PC-3 (cell line): ENCODE measurements at regions of chr5 and their contacts with region 1.

Region 1: GRCh38 chr5:103041071-103041676 is 78.8 kb downstream of the GIN1 start:
- DNase-seq: peak; percentile 88
- ATAC-seq: peak; percentile 78
- H3K4me3 ChIP-seq: no peak overlapping the region
- H3K27ac ChIP-seq: no peak overlapping the region
- H3K4me1 ChIP-seq: peaks cover 8% of the 10 kb centered on the region; the same call in 1 of the 2 replicates
- H3K27me3 ChIP-seq: no peaks in the 10 kb centered on the region
- CTCF ChIP-seq: peak; percentile 82

Region 2: DNA sequence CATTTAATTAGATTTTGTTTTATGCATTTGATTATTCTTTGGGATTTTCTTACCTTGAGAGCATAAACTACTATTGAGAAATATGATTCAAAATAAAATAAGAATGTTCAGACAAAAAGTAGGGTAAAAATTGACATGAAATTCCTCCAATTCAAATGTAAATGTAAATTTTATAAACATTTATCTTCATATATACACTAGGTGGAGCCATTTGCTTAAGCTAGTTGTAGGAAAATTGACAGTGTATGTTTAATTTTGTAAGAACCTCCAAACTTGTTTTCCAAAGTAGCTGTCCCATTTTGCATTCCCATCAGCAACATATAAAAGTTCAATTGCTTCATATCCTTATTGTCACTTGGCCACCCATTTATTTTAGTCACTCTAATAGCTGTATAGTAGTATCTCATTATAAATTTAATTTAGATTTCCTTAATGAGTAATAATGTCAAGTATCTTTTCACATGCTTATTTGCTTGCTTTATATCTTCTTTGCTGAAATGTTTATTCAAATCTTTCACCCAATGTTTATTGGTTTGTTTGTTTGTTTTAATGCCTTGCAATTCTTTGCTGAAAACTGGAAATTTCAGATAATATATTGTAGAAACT is 504.7 kb before region 1 on chr5:
- CTCF ChIA-PET with region 1: no interaction called
- POLR2A ChIA-PET with region 1: no interaction called
- intact Hi-C with region 1: loop called (anchors 1 kb)
- DNase-seq: peak; percentile 63
- ATAC-seq: peak; percentile 57
- H3K4me3 ChIP-seq: no peak overlapping the region
- H3K27ac ChIP-seq: no peak overlapping the region
- H3K4me1 ChIP-seq: no peaks in the 10 kb centered on the region
- H3K27me3 ChIP-seq: peaks cover 3% of the 10 kb centered on the region
- CTCF ChIP-seq: peak; percentile 79

Region 3: DNA sequence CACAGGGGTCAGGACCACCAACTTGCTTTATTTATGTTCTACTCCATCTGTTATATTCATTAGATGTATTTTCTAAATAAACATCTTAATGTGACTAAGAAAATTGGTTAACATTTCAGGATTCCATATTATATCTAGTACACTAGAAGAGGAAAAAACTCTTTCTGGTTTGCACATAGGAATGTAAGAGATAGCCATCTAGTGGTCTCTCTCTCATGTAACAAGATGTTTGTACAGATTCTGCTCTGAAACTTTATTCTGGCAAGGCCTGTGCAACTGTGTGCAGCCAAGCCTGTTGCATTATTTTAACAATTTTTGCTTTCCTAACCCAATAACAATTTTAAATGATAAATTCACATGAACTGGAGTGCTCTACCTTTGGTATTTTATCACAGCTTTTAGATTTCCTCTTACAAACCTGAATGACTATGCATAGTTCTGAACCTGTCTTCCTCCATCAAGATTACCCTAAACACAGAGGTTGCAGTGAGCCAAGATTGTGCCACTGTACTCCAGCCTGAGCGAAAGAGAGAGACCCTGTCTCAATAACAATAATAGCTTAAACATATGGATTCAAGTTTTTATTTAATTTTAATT is 69.4 kb before region 1 on chr5:
- CTCF ChIA-PET with region 1: no interaction called
- POLR2A ChIA-PET with region 1: no interaction called
- intact Hi-C with region 1: loop called (anchors 1 kb)
- DNase-seq: peak; percentile 70
- ATAC-seq: peak; percentile 82
- H3K4me3 ChIP-seq: no peak overlapping the region
- H3K27ac ChIP-seq: no peak overlapping the region
- H3K4me1 ChIP-seq: peaks cover 6% of the 10 kb centered on the region; the same call in 1 of the 2 replicates
- H3K27me3 ChIP-seq: no peaks in the 10 kb centered on the region
- CTCF ChIP-seq: peak; percentile 86